Activated CD4-positive, alpha-beta T cell treated with anti-CD3 and anti-CD28 coated beads for 36 hours (primary cell): ENCODE measurements at regions of chr5 and their contacts with region 1.

Region 1: GRCh38 chr5:96807075-96807654 is 580 bp downstream of the ERAP1 start:
- DNase-seq: peak; percentile 65
- ATAC-seq: peak; percentile 5
- H3K4me3 Mint-ChIP-seq: peak overlapping the region; percentile 89
- H3K27ac Mint-ChIP-seq: peak overlapping the region; percentile 94
- H3K4me1 Mint-ChIP-seq: peaks cover 55% of the 10 kb centered on the region
- H3K27me3 Mint-ChIP-seq: no peaks in the 10 kb centered on the region

Region 2: DNA sequence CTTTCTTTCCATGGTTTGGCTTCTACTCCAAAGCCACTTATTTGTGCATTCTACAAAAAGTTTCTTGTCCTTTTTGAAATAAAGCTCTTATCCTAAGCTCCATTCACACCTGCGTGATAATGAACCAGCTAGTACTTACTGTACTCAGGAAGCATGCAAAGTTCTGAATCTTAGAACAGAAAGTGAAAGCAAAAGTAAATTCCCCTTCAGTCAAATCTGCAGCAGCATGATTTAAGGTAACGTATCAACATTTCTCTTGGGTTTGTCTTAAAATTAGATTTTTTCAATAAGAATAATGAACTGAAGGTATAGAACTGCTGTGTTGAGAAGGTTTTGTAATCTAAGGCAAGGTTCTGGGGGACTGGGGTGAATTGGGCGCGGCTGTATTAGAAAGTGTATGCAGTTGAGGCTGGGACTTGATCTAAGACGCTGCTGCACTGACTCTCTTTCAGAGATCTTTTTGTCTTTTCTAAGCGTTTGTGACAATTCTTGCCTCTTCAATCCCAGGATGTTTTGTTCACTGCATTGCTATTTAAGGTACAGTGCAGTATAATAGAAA is 69.2 kb after region 1 on chr5 and contains the start of gene ERAP2:
- CTCF ChIA-PET with region 1: interaction called, 5 read pairs
- POLR2A ChIA-PET with region 1: interaction called, 3 read pairs
- intact Hi-C with region 1: loop called in 1 of 2 experiments (anchors 1 kb)
- DNase-seq: peak; percentile 34
- ATAC-seq: peak; percentile 72
- H3K4me3 Mint-ChIP-seq: peak within 1 kb of the TSS; percentile 86
- H3K27ac Mint-ChIP-seq: peak within 1 kb of the TSS; percentile 94
- H3K4me1 Mint-ChIP-seq: peaks cover 70% of the 10 kb centered on the region
- H3K27me3 Mint-ChIP-seq: no peaks in the 10 kb centered on the region
- total RNA-seq, gene ERAP2: 57.3 to 60.7 TPM